B cell (primary cell): ENCODE measurements at regions of chr21 and their contacts with region 1.

Region 1: DNA sequence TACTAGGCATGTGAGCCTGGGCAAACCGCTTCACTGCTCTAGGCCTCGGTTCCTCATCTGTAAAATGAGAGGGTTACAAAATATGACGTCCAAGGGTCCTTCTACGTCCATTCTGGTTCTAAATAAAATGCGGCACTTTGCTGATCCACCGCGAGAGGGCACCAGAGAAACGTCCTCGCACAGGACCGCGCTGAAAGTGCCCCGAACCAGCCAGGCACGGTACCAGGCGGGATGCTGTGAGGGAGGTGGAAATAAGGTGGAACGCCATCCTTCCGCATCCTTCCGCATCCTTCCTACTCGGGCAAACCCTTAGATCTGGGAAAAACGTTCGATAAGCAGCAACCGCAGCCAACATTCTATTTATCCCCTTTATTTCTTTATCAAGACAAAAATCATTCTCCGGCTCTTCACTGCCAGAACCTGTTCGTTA is 60.3 kb upstream of the KRTAP19-8 start:
- DNase-seq: peak; percentile 69
- ATAC-seq: peak; percentile 69
- H3K4me3 ChIP-seq: no peak overlapping the region
- H3K4me3 Mint-ChIP-seq: no peak overlapping the region
- H3K27ac ChIP-seq: no peak overlapping the region
- H3K27ac Mint-ChIP-seq: no peak overlapping the region
- H3K4me1 ChIP-seq: peaks cover 3 to 4% of the 10 kb centered on the region in 2 donors
- H3K4me1 Mint-ChIP-seq: peaks cover 15% of the 10 kb centered on the region
- H3K27me3 ChIP-seq: peaks cover 0 to 4% (median 0%) of the 10 kb centered on the region in 4 experiments
- H3K27me3 Mint-ChIP-seq: peaks cover 13% of the 10 kb centered on the region
- CTCF ChIP-seq: peak; percentile 82

Region 2: DNA sequence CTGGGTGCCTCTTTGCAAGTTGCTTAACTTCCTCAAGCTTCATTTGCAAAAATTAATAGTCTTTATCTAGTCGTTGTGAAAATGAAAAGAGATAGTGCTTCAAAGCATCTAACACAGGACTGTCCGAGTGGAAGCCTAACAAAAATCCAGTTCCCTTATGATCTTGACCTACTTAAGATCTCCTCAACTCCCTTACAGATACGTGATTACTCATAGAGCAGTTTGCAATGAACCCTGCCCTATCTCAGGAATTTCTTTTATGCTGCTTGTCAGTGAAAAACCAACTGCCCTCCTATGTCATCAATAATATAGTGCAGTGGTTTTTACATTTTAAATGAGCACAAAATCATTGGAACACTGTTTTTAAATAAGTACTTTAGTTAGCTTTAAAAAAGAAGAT is 1485.6 kb before region 1 on chr21:
- CTCF ChIA-PET with region 1: no interaction called
- POLR2A ChIA-PET with region 1: no interaction called
- intact Hi-C with region 1: no loop called
- DNase-seq: no peak
- ATAC-seq: no peak
- H3K4me3 ChIP-seq: no peak overlapping the region
- H3K4me3 Mint-ChIP-seq: no peak overlapping the region
- H3K27ac ChIP-seq: no peak overlapping the region
- H3K27ac Mint-ChIP-seq: no peak overlapping the region
- H3K4me1 ChIP-seq: no peaks in the 10 kb centered on the region
- H3K4me1 Mint-ChIP-seq: no peaks in the 10 kb centered on the region
- H3K27me3 ChIP-seq: no peaks in the 10 kb centered on the region
- H3K27me3 Mint-ChIP-seq: no peaks in the 10 kb centered on the region
- CTCF ChIP-seq: no peak

Region 3: DNA sequence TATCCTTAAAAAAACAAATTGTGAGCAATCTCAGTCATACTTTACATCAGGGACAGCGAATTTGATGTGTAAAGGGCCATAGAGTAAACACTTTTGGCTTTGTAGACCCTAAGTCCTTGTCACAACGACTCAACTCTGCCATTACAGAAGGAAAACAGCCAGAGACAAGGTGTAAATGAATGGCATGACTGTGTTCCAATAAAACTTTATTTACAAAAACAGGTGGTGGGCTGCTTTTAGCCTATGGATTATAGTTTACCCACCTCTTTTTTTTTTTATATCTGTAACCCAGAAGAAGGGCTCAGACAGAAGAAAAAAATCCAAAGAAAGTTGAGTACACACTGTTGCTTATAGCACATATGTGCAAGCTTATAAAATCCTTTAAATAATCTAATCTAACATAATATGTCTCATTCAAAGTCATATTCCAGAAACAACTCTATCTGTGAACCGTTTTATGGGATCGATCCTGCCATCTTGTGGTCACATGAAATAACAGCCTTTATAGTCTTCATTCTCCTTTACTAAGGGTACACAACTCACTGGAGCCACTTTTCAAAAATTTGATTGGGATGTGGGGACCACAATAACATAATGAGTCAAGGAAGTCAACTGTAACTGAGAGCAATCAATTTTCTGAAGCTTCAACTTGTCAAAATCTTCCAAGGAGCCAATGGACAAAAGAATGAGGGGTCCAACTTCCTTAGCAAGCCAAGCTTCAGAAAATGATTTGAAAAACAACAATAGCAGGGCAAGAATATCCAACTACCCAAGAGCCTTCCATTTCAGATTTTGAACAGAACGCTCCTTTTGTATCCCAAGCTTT is 81.9 kb after region 1 on chr21:
- CTCF ChIA-PET with region 1: interaction called, 10 read pairs
- POLR2A ChIA-PET with region 1: no interaction called
- intact Hi-C with region 1: loop called (anchors 2 kb)
- DNase-seq: peak; percentile 21
- ATAC-seq: no peak
- H3K4me3 ChIP-seq: no peak overlapping the region
- H3K4me3 Mint-ChIP-seq: no peak overlapping the region
- H3K27ac ChIP-seq: no peak overlapping the region
- H3K27ac Mint-ChIP-seq: no peak overlapping the region
- H3K4me1 ChIP-seq: peaks cover 0 to 5% of the 10 kb centered on the region in 2 donors
- H3K4me1 Mint-ChIP-seq: peaks cover 6% of the 10 kb centered on the region
- H3K27me3 ChIP-seq: no peaks in the 10 kb centered on the region
- H3K27me3 Mint-ChIP-seq: no peaks in the 10 kb centered on the region
- CTCF ChIP-seq: peak; percentile 60

Region 4: GRCh38 chr21:31604591-31605190 is 506.1 kb after region 1 on chr21:
- CTCF ChIA-PET with region 1: interaction called, 17 read pairs
- POLR2A ChIA-PET with region 1: no interaction called
- intact Hi-C with region 1: loop called (anchors 1 kb)
- DNase-seq: peak; percentile 73
- ATAC-seq: peak; percentile 61
- H3K4me3 ChIP-seq: no peak overlapping the region
- H3K4me3 Mint-ChIP-seq: no peak overlapping the region
- H3K27ac ChIP-seq: no peak overlapping the region
- H3K27ac Mint-ChIP-seq: no peak overlapping the region
- H3K4me1 ChIP-seq: peaks cover 3% of the 10 kb centered on the region in 2 donors
- H3K4me1 Mint-ChIP-seq: peaks cover 2% of the 10 kb centered on the region
- H3K27me3 ChIP-seq: peaks cover 0 to 6% (median 0%) of the 10 kb centered on the region in 4 experiments
- H3K27me3 Mint-ChIP-seq: peaks cover 11% of the 10 kb centered on the region
- CTCF ChIP-seq: peak; percentile 92